ENCODE measurements at regions of chr7 and their contacts with region 1.

Region 1: GRCh38 chr7:106176414-106177299 is 64.5 kb upstream of the SYPL1 start:
- DNase-seq: peak; percentile 81 to 92 (median 84)
- ATAC-seq: peak; percentile 80 to 92 (median 90)
- H3K4me3 ChIP-seq: no peak overlapping the region
- H3K27ac ChIP-seq: peak overlapping the region in 6 of 12 donors; percentile 8 to 72 (median 37)
- H3K4me1 ChIP-seq: peaks cover 4 to 35% (median 17%) of the 10 kb centered on the region in 12 donors
- H3K27me3 ChIP-seq: peaks cover 0 to 4% (median 0%) of the 10 kb centered on the region in 9 donors
- CTCF ChIP-seq: peak; percentile 90 to 99 (median 96)
- POLR2A ChIP-seq: no peak

Region 2: DNA sequence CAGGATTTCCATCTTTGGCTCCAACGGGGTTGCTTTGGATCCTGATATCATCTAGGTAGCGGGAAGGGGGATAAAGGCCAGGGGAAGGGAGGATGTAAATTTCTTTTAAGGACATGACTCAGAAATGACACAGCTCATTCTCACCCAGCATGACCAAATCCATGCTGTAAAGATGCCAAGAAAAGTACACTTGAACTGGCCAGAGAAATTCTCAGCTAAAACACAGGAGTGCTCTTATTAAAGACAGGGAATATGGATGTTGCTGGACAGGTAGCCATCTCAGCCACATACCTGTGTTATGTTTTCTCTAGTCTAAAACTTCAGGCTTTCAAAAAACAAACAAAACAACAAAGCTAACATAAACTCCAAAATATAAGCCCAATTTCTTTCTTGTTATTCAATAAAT is 39.9 kb after region 1 on chr7:
- intact Hi-C with region 1: loop called in 3 of 10 experiments (anchors 2 to 5 kb)
- DNase-seq: peak in 3 of 5 donors; percentile 32 to 79 (median 48)
- ATAC-seq: peak; percentile 68 to 89 (median 86)
- H3K4me3 ChIP-seq: peak overlapping the region in 8 of 12 donors; percentile 6 to 33 (median 28)
- H3K27ac ChIP-seq: peak overlapping the region; percentile 76 to 93 (median 88)
- H3K4me1 ChIP-seq: peaks cover 7 to 38% (median 24%) of the 10 kb centered on the region in 12 donors
- H3K27me3 ChIP-seq: no peaks in the 10 kb centered on the region
- CTCF ChIP-seq: no peak
- POLR2A ChIP-seq: no peak

Region 3: DNA sequence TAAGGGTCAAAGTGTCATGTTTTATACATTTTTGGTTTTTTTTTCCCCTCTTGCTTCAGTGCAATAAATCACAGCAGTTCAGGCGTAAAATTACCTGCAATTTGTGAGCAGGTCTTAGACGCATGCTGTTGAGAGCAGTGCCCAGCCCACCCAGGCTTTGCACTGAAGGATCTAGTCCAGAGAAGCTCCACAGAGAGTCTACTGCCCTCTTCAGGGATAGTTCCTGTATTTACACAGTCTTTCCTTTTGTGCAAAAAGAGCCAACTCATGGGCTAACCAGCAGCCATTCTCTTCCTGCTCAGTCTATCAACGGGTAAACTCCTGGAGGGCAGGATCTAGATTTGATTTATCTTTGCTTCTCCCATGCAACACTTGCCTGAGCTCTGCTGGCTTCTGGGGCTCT is 190.4 kb after region 1 on chr7:
- intact Hi-C with region 1: loop called in 1 of 10 experiments (anchors 10 kb)
- DNase-seq: no peak
- ATAC-seq: peak in 2 of 4 donors; percentile 57 to 67
- H3K4me3 ChIP-seq: no peak overlapping the region
- H3K27ac ChIP-seq: no peak overlapping the region
- H3K4me1 ChIP-seq: peaks cover 0 to 26% (median 0%) of the 10 kb centered on the region in 12 donors
- H3K27me3 ChIP-seq: no peaks in the 10 kb centered on the region
- CTCF ChIP-seq: peak in 3 of 12 donors; percentile 13 to 37 (median 25)
- POLR2A ChIP-seq: no peak

Region 4: DNA sequence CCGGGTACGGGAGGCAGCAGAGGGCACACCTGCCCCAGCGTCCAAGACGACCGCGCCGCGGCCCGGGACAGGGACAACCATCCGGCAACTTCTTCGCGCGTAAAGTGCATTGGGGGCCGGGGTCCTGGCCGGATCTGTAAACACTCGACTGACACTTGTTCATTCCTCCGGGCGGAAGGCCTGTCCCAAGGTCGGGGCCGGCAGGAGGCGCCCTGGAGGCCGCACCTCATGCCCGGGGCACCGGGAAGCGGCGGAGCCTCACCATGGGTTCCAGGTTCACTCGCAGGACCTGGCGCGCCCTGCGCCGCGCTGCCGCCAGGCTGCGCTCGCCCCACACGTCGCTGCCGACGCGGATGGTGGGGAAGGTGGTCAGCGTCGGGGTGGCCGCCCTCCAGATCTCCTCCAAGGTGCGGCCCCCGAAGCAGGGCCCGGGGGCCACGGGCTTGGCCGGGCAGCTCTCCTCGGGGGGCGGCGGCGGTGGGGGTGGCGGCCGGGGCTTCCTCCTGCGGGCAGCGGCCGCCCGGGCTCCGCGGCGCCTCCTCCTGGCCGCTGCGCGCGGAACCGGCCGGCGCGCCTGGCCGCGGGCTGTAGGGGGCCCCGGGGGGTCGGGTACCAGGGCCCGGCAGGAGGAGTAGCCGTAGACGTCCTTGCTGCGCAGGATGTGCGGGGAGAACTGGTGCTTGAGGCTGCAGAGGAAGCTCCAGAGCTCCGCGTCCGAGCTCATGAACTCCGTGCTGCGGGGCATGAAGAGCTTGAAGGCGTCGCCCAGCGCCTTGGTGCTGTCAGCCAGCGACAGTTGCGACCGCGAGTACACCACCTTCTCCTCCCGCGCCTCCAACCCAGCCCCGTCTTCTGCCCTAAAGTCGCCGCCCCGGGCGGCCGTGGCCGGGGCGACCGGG is 483.6 kb after region 1 on chr7:
- intact Hi-C with region 1: loop called in 3 of 10 experiments (anchors 2 to 5 kb)
- DNase-seq: peak; percentile 73 to 90 (median 76)
- ATAC-seq: peak; percentile 28 to 78 (median 65)
- H3K4me3 ChIP-seq: peak overlapping the region; percentile 78 to 93 (median 85)
- H3K27ac ChIP-seq: peak overlapping the region; percentile 92 to 97 (median 95)
- H3K4me1 ChIP-seq: peaks cover 0 to 32% (median 17%) of the 10 kb centered on the region in 12 donors
- H3K27me3 ChIP-seq: no peaks in the 10 kb centered on the region
- CTCF ChIP-seq: peak; percentile 63 to 84 (median 73)
- POLR2A ChIP-seq: peak in 1 of 2 donors; percentile 14

Region 5: DNA sequence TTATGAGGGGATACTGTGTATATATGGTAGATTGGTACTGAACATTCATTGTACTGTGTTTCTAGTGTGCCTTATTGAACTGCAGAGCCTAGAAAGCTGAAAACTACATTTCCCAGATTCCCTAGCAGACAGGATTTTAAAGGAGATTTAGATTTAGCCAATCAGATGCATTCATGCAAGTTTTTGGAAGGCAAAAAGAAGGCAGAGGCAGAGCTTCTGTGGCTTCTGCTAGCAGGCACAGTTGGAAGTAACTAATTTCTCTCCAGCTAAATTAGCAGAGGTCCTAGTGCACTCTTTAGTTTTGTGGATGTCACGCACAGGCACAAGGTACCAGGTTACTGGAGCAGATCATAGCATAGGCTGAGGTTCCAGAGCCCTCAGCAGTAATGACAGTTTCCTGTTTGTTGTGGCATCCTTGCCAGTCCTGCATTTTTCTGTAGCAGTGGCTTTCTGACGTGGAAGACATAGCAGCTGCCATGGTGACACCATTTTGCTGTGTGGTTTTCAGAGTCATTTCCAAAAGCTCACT is 568.0 kb after region 1 on chr7:
- intact Hi-C with region 1: loop called in 6 of 10 experiments (anchors 5 kb)
- DNase-seq: no peak
- ATAC-seq: no peak
- H3K4me3 ChIP-seq: no peak overlapping the region
- H3K27ac ChIP-seq: no peak overlapping the region
- H3K4me1 ChIP-seq: peaks cover 0 to 14% (median 0%) of the 10 kb centered on the region in 12 donors
- H3K27me3 ChIP-seq: no peaks in the 10 kb centered on the region
- CTCF ChIP-seq: no peak
- POLR2A ChIP-seq: no peak